SK-N-SH (cell line): ENCODE measurements at regions of chr7 and their contacts with region 1.

Region 1: DNA sequence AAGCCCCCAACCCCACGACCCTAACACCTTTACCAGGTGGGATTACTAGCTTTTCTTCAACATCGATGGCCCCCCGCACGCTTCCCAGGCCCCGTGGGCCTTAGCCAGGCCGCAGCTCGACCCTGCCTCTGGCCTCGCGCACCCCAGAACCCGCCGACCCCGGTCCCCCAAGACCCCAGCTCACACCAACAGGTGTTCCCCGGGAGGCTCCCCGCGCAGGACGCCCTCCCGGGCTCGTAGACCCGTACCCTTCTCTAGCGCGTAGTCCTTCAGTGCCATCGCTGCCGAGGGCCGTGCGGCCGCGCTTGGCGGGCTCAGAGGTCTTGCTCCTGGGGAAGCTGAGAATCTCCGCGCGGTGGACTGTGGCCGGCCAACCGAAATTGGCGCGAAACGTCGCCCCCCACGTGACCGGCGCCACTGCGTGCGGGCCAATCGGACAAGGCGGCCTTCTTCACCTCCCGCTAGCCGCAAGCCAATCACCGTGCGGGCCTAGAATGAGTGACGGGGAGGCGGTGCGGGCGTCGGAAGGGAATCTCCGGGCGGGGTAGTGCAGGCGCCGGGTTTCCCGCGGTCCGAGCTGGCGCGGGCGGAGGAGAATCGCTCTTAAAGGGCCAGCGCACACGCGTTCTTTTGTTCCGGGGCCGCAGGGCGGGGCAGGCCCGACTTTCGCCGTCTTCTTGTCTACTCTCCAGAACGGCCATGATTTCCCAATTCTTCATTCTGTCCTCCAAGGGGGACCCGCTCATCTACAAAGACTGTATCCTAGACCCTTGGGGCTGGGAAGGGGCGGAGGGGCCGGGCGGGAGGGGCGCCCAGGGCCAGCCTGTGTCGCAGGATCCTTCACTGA is at the starts of genes AP4M1 and MCM7:
- DNase-seq: peak; percentile 97
- H3K4me3 ChIP-seq: peak within 1 kb of the TSS; percentile 70 to 99
- H3K27ac ChIP-seq: peak within 1 kb of the TSS; percentile 94 to 95
- H3K4me1 ChIP-seq: peaks cover 24 to 33% of the 10 kb centered on the region in 2 experiments
- H3K27me3 ChIP-seq: no peaks in the 10 kb centered on the region
- CTCF ChIP-seq: no peak
- EP300 ChIP-seq: no peak; a peak in 1 of 4 replicates
- RAD21 ChIP-seq: no peak
- polyA plus RNA-seq, gene AP4M1: 35.0 and 39.2 TPM in 2 replicates
- polyA plus RNA-seq, gene MCM7: 235 and 241 TPM in 2 replicates

Region 2: DNA sequence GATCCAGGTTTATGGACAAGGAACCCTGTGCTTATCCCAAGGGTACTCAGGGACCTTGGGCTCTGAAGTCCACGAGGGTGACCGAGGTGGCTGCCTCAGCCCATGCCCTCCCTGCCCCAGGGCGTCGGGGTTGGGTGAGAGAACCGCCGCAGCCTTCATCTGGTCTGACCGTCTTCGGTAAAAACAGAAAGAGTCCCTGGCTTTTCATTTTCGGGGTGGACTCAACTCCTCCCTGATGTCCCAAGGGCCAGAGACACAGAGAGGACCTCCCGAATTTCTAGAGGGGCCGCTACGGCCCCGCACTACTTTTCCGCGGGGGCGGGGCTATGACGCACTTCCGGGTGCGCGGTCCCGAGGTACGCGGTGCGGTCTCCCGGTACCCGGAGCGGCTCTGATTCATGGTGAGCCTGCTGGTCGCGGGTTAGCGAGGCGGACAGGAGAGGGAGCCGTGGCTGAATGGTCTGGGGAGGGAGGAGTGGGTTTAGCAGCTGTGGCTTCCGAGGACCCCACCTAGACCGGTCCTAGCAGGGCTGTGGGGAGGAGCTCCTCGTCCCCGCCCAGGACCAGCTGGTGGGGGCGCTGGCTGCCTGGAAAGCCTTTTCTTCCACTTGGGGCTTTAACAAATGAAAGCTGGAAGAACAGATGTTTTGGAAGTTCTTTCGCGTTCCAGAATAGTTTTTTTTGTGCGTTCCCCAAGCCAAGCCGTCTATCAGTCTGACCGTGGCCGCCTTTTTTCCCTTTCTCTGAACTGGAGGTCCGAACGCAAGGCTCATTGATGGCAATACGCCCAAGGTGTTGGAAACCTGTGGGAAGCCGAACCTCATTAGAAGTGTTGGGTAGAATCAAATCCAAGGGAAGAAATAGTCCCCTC is 51.6 kb before region 1 on chr7 and contains the start of gene ZSCAN21:
- CTCF ChIA-PET with region 1: interaction called, 4 read pairs
- POLR2A ChIA-PET with region 1: interaction called, 13 read pairs
- DNase-seq: peak; percentile 96
- H3K4me3 ChIP-seq: peak within 1 kb of the TSS; percentile 70 to 86
- H3K27ac ChIP-seq: peak within 1 kb of the TSS; percentile 93 to 94
- H3K4me1 ChIP-seq: peaks cover 5 to 9% of the 10 kb centered on the region in 2 experiments; a peak in 2 of 4 replicates
- H3K27me3 ChIP-seq: no peaks in the 10 kb centered on the region
- CTCF ChIP-seq: peak; percentile 47
- EP300 ChIP-seq: 0 out of 4 replicates have a peak, but pooled peaks of 1 of the 2 experiments have one; percentile 20
- RAD21 ChIP-seq: peak; percentile 31; the same call in 1 of the 2 replicates
- polyA plus RNA-seq, gene ZSCAN21: 17.5 and 22.8 TPM in 2 replicates

Region 3: DNA sequence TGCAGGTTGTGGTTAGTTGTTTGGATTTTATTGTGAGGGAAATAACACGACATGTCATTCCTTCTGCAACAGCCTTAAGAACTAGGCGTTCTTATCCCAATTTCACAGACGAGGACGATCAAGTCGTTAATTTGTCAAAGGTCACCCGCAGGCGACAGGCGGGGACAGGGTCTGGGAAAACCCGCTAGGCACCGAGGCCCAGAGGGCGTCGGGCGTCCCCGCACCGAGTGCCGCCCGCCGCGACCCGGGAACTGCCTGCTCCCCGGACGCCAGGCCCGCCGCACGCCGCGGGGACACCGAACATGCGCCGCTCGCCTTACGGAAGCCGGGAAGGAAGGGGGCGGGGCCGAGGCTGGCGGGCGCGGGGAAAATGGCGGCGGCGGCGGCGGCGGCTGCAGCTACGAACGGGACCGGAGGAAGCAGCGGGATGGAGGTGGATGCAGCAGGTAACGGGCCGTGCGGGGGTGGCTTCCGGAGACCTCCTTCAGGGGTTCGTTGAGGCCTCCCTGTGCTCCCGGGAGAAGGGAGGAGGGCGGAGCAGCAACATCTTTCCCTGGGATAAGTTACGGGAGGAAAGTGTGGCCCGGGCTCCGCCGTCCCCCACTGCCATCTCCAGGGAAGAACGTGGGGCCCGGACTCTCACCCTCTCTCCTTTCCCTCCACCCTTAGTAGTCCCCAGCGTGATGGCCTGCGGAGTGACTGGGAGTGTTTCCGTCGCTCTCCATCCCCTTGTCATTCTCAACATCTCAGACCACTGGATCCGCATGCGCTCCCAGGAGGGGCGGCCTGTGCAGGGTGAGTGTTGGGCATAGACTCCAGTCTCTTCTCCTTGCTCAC is 12.4 kb before region 1 on chr7 and contains the start of gene COPS6:
- CTCF ChIA-PET with region 1: interaction called, 39 read pairs
- POLR2A ChIA-PET with region 1: interaction called, 98 read pairs
- DNase-seq: peak; percentile 97
- H3K4me3 ChIP-seq: peak within 1 kb of the TSS; percentile 71 to 87
- H3K27ac ChIP-seq: peak within 1 kb of the TSS; percentile 84 to 98
- H3K4me1 ChIP-seq: peaks cover 25 to 33% of the 10 kb centered on the region in 2 experiments; a peak in 3 of 4 replicates
- H3K27me3 ChIP-seq: no peaks in the 10 kb centered on the region
- CTCF ChIP-seq: no peak
- EP300 ChIP-seq: no peak; a peak in 1 of 4 replicates
- RAD21 ChIP-seq: no peak
- polyA plus RNA-seq, gene COPS6: 413 and 435 TPM in 2 replicates

Region 4: DNA sequence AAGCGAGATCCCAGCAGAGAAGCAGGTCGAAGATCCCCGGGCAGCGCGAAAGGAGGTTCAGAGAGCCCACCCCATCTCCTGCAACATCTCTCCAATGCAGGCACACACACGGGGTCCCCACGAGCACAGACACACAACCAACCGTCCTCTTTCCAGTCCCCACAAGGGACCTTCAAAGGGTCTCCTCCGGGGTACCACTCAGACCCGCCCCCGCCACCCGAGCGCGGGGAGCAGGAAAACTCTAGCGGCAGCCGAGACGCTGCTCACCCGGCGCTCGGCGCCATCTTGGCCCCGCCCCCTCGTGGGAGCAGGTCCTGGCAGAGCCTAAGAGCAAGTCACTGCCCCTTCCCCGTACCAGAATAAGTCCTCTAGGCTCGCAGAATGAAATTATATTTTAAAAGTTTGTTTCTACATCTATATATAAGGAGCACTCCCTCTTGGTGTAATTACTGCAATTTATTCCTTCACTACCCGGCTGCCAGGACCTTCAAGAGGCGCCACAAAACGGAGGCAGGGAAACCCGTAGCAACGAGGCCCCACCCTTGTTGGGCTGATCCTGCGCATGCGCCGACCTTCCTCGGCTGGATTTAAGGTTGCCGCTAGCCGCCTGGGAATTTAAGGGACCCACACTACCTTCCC is 17.9 kb after region 1 on chr7 and contains the starts of genes CNPY4 and TAF6:
- CTCF ChIA-PET with region 1: interaction called, 9 read pairs
- POLR2A ChIA-PET with region 1: interaction called, 70 read pairs
- DNase-seq: peak; percentile 100
- H3K4me3 ChIP-seq: peak within 1 kb of the TSS; percentile 69 to 97
- H3K27ac ChIP-seq: peak within 1 kb of the TSS; percentile 84
- H3K4me1 ChIP-seq: peaks cover 0 to 11% of the 10 kb centered on the region in 2 experiments; a peak in 2 of 4 replicates
- H3K27me3 ChIP-seq: no peaks in the 10 kb centered on the region
- CTCF ChIP-seq: no peak
- EP300 ChIP-seq: no peak
- RAD21 ChIP-seq: no peak
- polyA plus RNA-seq, gene CNPY4: 52.0 and 65.0 TPM in 2 replicates
- polyA plus RNA-seq, gene TAF6: 31.7 and 70.5 TPM in 2 replicates

Region 5: DNA sequence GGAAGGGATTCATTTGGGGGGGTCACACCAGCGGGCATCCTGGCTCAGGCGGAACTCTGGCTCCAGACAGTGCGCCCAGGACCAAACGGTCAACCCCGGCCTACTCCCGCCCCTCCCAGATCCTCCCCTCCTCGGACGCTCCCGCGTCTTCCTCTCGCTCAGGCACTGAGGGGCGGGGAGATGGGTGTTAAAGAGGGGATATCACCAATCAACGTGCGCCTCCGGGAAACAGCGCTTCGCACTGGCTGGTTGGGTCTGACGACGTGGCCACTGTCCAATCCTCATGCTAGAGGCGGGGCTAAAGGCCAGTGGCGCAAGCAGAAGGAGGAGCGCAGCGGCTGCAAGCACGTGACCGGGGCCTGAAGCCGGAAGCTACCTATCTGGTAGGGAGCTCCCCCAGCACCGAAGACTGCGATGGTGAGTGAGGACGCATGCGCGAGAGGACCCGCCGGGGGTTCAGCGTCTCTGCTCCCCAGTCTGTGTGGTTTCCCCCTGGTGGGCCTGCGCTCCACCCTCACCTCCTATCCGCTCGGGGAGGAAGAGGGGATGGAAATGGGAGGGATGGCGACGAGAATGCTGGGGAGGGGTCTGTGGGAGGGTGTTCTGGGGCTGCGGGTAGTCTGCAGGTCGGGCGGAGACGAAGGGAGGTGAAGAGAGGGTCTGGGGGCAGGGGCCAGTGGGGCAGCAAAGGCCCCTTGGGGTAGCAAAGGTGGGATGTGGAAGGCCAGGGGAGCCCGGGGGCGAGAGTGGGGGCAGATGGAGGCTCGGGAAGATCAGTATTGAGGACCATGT is 47.5 kb after region 1 on chr7 and contains the start of gene LAMTOR4:
- CTCF ChIA-PET with region 1: no interaction called
- POLR2A ChIA-PET with region 1: interaction called, 23 read pairs
- DNase-seq: peak; percentile 98
- H3K4me3 ChIP-seq: peak within 1 kb of the TSS; percentile 66 to 83
- H3K27ac ChIP-seq: peak within 1 kb of the TSS; percentile 57 to 80; a peak in 3 of 4 replicates
- H3K4me1 ChIP-seq: peaks cover 5 to 7% of the 10 kb centered on the region in 2 experiments; a peak in 2 of 4 replicates
- H3K27me3 ChIP-seq: no peaks in the 10 kb centered on the region
- CTCF ChIP-seq: peak; percentile 13; the same call in 1 of the 2 replicates
- EP300 ChIP-seq: peak in 1 of 2 experiments; percentile 17; a peak in 2 of 4 replicates
- RAD21 ChIP-seq: no peak
- polyA plus RNA-seq, gene LAMTOR4: 600 and 630 TPM in 2 replicates